HepG2 (cell line): ENCODE measurements at regions of chr10 and their contacts with region 1.

Region 1: GRCh38 chr10:3785257-3785850 is 345 bp upstream of the KLF6 start:
- DNase-seq: peak; percentile 95
- ATAC-seq: peak; percentile 75
- H3K4me3 ChIP-seq: peak overlapping the region; percentile 69 to 98 (median 96)
- H3K27ac ChIP-seq: peak overlapping the region; percentile 99
- H3K4me1 ChIP-seq: peaks cover 51% of the 10 kb centered on the region
- H3K27me3 ChIP-seq: no peaks in the 10 kb centered on the region; a peak in 1 of 5 replicates
- CTCF ChIP-seq: no peak
- EP300 ChIP-seq: 0 out of 4 replicates have a peak, but pooled peaks of 1 of the 2 experiments have one; percentile 5
- POLR2A ChIP-seq: peak; percentile 88 to 94
- RAD21 ChIP-seq: peak; percentile 84

Region 2: DNA sequence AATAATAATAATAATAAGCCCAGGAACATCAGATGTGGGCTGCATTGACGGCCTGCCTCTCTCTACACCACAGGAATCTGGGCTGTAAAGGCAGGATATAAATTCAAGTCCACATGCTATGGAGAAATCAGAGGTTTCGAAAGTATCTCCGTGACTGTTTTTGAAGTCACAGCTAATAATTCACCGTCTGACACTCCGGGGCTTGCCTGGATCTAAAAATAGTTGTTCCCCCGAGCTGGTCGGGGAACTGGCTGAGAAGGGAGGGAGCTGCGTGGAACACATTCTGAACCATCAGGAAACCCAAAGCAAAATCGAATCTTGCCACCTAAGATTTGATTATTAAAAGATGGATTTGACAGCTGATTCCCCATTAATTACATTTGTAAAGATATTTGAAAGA is 35.8 kb before region 1 on chr10:
- CTCF ChIA-PET with region 1: no interaction called
- POLR2A ChIA-PET with region 1: interaction called, 16 read pairs
- in situ Hi-C with region 1: no loop called
- intact Hi-C with region 1: no loop called
- DNase-seq: peak; percentile 31
- ATAC-seq: peak; percentile 19; the same call in 1 of the 3 replicates
- H3K4me3 ChIP-seq: peak overlapping the region; percentile 4 to 53 (median 52); a peak in 5 of 6 replicates
- H3K27ac ChIP-seq: no peak overlapping the region
- H3K4me1 ChIP-seq: peaks cover 78% of the 10 kb centered on the region
- H3K27me3 ChIP-seq: no peaks in the 10 kb centered on the region
- CTCF ChIP-seq: no peak
- EP300 ChIP-seq: no peak
- POLR2A ChIP-seq: no peak
- RAD21 ChIP-seq: no peak

Region 3: GRCh38 chr10:3802526-3803265 is 17.3 kb after region 1 on chr10:
- CTCF ChIA-PET with region 1: no interaction called
- POLR2A ChIA-PET with region 1: interaction called, 217 read pairs
- in situ Hi-C with region 1: no loop called
- intact Hi-C with region 1: no loop called
- DNase-seq: no peak
- ATAC-seq: no peak
- H3K4me3 ChIP-seq: no peak overlapping the region
- H3K27ac ChIP-seq: no peak overlapping the region
- H3K4me1 ChIP-seq: peaks cover 52% of the 10 kb centered on the region
- H3K27me3 ChIP-seq: no peaks in the 10 kb centered on the region
- CTCF ChIP-seq: no peak
- EP300 ChIP-seq: no peak
- POLR2A ChIP-seq: no peak
- RAD21 ChIP-seq: no peak

Region 4: DNA sequence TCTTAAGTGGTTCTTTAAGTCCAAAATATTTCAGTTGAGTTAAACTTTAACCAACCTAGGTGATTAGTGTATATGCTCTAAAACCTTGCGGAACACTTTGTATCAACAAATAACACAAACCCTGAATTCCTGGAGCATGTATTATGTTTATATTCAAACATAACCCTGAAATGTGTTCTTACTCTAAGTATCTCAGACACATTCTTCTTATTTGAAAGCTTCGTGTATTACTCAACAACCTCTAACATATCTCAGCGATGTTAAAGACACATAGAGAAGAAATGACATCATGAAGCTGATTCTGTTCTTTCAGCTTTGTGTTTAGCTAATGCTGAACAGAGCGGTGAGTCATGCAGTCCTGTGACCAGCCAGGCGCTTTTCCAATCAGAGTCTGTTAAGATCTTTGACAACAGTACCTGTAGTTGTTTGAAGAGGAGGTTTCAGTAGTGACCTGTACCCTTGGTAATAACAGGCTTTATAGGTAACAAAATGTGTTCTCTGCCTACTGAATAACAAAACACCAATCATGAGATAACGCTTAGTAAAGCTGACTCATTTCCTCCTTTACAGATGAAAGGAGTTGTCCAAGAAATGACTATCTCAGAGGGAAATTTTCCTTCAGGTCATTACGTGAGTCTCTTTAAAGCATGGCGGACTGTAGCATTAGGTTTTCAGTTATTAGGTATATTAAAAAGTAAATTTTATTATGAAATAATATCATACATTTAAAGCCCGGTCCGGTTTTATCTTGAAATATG is 67.0 kb after region 1 on chr10:
- CTCF ChIA-PET with region 1: no interaction called
- POLR2A ChIA-PET with region 1: interaction called, 129 read pairs
- in situ Hi-C with region 1: loop called (anchors 5 kb)
- intact Hi-C with region 1: loop called (anchors 1 kb)
- DNase-seq: peak; percentile 98
- ATAC-seq: peak; percentile 96
- H3K4me3 ChIP-seq: peak overlapping the region in 2 of 3 experiments; percentile 20 to 35; a peak in 2 of 6 replicates
- H3K27ac ChIP-seq: peak overlapping the region; percentile 70
- H3K4me1 ChIP-seq: peaks cover 65% of the 10 kb centered on the region
- H3K27me3 ChIP-seq: no peaks in the 10 kb centered on the region
- CTCF ChIP-seq: no peak
- EP300 ChIP-seq: peak; percentile 23 to 90; a peak in 3 of 4 replicates
- POLR2A ChIP-seq: no peak
- RAD21 ChIP-seq: no peak

Region 5: GRCh38 chr10:3902054-3902808 is 116.9 kb after region 1 on chr10:
- CTCF ChIA-PET with region 1: no interaction called
- POLR2A ChIA-PET with region 1: interaction called, 10 read pairs
- in situ Hi-C with region 1: no loop called
- intact Hi-C with region 1: loop called (anchors 5 kb)
- DNase-seq: peak; percentile 38
- ATAC-seq: no peak
- H3K4me3 ChIP-seq: no peak overlapping the region
- H3K27ac ChIP-seq: peak overlapping the region; percentile 33
- H3K4me1 ChIP-seq: peaks cover 39% of the 10 kb centered on the region
- H3K27me3 ChIP-seq: no peaks in the 10 kb centered on the region
- CTCF ChIP-seq: 0 out of 2 replicates have a peak, but pooled peaks have one; percentile 14
- EP300 ChIP-seq: peak in 1 of 2 experiments; percentile 32; a peak in 1 of 4 replicates
- POLR2A ChIP-seq: no peak
- RAD21 ChIP-seq: no peak